Activated CD4-positive, alpha-beta T cell treated with anti-CD3 and anti-CD28 coated beads, Interleukin-2, amount 10 ng/mL, durations not matched to agents 24 days and 14 days (primary cell): ENCODE measurements at regions of chr6 and their contacts with region 1.

Region 1: DNA sequence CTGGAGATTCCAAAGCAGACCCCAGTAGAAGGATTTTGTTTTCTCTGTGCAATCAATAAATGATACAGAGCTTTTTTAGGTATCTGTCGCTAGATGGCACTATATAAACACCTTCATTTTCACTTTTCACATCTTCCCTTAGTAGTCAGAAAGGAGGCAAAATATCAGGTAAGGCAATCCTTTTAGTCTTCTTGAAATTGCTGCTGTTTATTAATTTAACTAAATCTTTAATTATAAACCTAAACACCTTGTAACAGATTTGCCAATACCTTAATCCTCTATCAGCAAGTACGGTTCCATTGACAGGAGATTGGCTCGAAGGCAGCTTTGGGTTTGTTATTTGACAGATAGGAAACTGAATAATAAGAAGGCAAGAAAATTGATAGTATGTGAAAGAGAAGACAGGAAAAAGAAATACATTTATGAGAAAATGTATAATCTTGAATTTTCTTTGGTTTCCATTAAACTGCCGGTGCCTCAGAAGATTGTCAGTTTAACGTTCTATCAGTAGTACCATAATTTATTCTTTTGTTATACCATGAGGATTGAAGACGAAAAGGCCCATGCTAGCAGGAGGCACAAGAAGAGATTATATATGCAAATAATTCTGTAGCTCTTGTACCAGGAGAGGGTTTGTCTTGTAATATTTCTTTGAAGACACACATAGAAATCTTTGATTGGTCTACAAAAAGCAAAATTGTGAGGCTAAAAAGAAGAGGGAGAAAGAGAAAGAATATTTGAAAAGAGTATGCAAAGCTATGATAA is 23.5 kb upstream of the IBTK start:
- DNase-seq: no peak
- H3K4me3 Mint-ChIP-seq: no peak overlapping the region
- H3K27ac Mint-ChIP-seq: no peak overlapping the region
- H3K4me1 Mint-ChIP-seq: no peaks in the 10 kb centered on the region
- H3K27me3 Mint-ChIP-seq: peaks cover 8% of the 10 kb centered on the region

Region 2: DNA sequence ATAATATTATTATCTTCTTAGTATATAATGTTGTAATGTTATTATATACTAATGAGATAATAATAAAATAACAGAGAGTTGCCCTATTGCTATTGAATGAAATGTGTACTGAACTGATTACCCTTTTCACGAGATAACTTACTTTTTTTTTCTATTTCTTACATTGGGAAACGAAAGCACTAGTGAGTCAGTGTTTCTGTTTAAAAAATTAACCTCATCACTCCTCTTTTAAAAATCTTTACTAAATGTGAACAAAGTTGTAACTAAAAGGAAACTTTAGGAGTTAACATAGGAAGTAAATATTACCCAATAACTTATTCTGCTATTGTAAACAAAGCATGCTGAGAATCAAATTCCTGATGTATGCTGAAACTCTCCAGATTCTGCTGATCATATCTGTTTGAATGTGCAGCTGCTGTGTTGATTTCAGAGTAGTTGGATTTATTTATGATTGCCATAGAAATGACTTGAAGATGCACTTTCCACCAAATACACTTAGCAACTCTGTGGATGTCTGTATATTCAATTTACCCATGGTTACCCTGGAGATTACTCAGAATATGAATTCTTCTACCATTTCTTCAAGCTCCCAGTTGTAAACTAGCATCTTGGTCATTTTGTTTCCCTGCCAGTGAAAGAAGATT is 1042.0 kb before region 1 on chr6:
- intact Hi-C with region 1: no loop called
- DNase-seq: no peak
- H3K4me3 Mint-ChIP-seq: no peak overlapping the region
- H3K27ac Mint-ChIP-seq: no peak overlapping the region
- H3K4me1 Mint-ChIP-seq: no peaks in the 10 kb centered on the region
- H3K27me3 Mint-ChIP-seq: no peaks in the 10 kb centered on the region

Region 3: GRCh38 chr6:82712852-82713251 is 441.8 kb after region 1 on chr6:
- intact Hi-C with region 1: loop called (anchors 2 kb)
- DNase-seq: no peak
- H3K4me3 Mint-ChIP-seq: no peak overlapping the region
- H3K27ac Mint-ChIP-seq: no peak overlapping the region
- H3K4me1 Mint-ChIP-seq: no peaks in the 10 kb centered on the region
- H3K27me3 Mint-ChIP-seq: no peaks in the 10 kb centered on the region

Region 4: GRCh38 chr6:83055366-83055964 is 784.4 kb after region 1 on chr6:
- intact Hi-C with region 1: loop called (anchors 1 kb)
- DNase-seq: peak; percentile 81
- H3K4me3 Mint-ChIP-seq: no peak overlapping the region
- H3K27ac Mint-ChIP-seq: no peak overlapping the region
- H3K4me1 Mint-ChIP-seq: peaks cover 6% of the 10 kb centered on the region
- H3K27me3 Mint-ChIP-seq: no peaks in the 10 kb centered on the region

Region 5: GRCh38 chr6:83215131-83216047 is 944.3 kb after region 1 on chr6:
- intact Hi-C with region 1: loop called (anchors 10 kb)
- DNase-seq: peak; percentile 86
- H3K4me3 Mint-ChIP-seq: no peak overlapping the region
- H3K27ac Mint-ChIP-seq: no peak overlapping the region
- H3K4me1 Mint-ChIP-seq: peaks cover 3% of the 10 kb centered on the region
- H3K27me3 Mint-ChIP-seq: peaks cover 20% of the 10 kb centered on the region